Psoas muscle (tissue), 8 donors: ENCODE measurements at regions of chr10 and their contacts with region 1.

Region 1: GRCh38 chr10:45561952-45562351 is 110.6 kb downstream of the ZFAND4 start:
- DNase-seq: no peak
- ATAC-seq: no peak
- H3K4me3 ChIP-seq: no peak overlapping the region
- H3K27ac ChIP-seq: no peak overlapping the region
- H3K4me1 ChIP-seq: no peaks in the 10 kb centered on the region
- H3K27me3 ChIP-seq: no peaks in the 10 kb centered on the region
- CTCF ChIP-seq: no peak

Region 2: DNA sequence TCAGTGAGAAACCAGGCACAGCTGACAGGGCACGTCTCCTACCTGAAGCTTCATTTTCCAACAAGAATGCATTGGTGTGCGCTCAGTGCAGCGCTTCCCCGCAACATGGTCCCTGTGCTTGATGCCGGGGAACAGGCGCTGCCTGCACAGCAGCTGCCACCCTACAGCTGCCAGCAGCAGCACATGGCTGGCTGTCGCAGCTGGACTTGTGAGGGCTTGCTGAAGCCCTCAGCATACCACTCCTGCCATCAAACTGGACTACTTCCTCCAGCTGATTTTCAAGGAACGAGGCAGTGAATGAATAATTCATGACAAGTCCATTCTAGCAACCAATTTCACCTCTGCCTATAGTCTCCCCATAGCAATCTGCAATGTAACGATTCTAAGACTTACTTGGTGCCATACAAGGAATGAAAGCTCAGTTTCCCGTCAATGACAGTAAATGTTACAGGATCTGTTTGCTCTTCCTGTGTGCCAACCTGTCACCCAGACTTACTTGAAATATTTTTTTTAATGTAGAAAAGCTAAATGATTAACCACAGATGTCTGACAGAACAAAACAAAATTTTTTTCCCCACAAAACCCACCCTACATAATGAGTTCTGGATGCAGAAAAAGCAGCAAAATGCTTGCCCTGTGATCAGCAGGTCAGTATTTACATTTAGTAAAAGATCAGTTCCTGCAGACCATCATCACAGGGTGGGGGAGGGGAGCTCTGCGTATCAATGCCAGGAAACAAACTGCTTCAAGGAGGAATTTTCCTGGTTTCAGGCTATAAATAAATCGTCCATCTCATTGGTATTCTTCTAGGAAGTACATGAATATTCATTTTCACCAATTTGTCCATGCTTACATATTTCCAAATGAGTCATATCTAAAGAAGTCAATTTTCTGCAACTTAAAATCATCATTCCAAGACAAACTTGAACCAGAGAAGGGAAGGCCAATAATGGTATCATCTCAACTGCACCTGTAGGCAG is 47.4 kb before region 1 on chr10:
- intact Hi-C with region 1: no loop called
- DNase-seq: no peak
- ATAC-seq: peak; percentile 47 to 79 (median 73)
- H3K4me3 ChIP-seq: no peak overlapping the region
- H3K27ac ChIP-seq: no peak overlapping the region
- H3K4me1 ChIP-seq: peaks cover 11% of the 10 kb centered on the region
- H3K27me3 ChIP-seq: no peaks in the 10 kb centered on the region
- CTCF ChIP-seq: no peak

Region 3: DNA sequence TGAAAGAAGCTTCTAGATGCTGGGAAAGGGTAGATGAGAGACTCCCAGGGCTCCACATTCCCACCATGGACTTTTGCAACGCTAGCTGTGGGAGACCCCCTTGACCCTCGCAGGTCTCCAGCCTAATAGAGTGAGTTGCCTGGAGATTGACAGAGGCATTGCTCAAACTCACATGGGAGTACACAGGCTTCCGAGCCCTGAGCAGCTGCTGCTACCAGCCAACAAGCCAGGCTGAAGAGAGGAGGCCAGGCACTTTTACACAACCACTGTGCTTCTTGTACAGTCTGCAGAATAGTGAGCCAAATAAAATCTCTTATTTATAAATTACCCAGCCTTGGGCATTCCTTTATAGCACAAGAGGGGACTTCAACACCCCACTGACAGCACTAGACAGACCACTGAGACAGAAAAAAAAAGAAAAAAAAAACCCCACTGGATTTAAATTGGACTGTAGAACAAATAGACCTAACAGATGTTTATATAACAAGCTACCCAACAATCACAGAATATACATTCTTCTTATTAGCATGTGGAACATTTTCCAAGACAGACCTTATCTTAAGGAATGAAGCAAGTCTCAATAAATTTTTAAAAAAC is 35.5 kb before region 1 on chr10:
- intact Hi-C with region 1: loop called in 1 of 2 experiments (anchors 5 kb)
- DNase-seq: no peak
- ATAC-seq: peak in 1 of 4 donors; percentile 53
- H3K4me3 ChIP-seq: no peak overlapping the region
- H3K27ac ChIP-seq: no peak overlapping the region
- H3K4me1 ChIP-seq: no peaks in the 10 kb centered on the region
- H3K27me3 ChIP-seq: no peaks in the 10 kb centered on the region
- CTCF ChIP-seq: no peak